Calu3 (cell line): ENCODE measurements at regions of chr16 and their contacts with region 1.

Region 1: DNA sequence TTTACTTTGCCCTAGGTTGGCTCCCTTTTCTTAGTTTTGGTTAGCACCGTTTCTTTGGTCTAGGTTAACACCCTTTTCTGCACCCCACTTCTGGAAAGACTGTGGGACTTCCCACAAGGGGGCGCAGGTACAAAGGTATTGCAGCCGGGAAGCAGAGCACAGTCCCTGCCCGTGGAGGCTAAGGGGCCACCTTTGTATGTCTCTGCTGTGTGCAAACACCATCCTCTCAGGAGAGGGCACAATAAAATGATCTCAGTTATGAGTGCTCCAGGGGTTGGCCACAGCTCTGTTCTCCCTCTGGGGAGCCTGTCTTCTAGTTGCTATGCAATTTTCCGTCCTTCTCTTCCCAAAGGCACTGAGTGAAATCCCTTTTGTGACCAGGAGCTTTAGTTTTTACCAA is 28.4 kb upstream of the TMC5 start:
- DNase-seq: peak; percentile 69
- H3K4me3 Mint-ChIP-seq: no peak overlapping the region
- H3K27ac Mint-ChIP-seq: no peak overlapping the region
- H3K4me1 Mint-ChIP-seq: peaks cover 41% of the 10 kb centered on the region
- H3K27me3 Mint-ChIP-seq: no peaks in the 10 kb centered on the region
- CTCF ChIP-seq: peak; percentile 61

Region 2: DNA sequence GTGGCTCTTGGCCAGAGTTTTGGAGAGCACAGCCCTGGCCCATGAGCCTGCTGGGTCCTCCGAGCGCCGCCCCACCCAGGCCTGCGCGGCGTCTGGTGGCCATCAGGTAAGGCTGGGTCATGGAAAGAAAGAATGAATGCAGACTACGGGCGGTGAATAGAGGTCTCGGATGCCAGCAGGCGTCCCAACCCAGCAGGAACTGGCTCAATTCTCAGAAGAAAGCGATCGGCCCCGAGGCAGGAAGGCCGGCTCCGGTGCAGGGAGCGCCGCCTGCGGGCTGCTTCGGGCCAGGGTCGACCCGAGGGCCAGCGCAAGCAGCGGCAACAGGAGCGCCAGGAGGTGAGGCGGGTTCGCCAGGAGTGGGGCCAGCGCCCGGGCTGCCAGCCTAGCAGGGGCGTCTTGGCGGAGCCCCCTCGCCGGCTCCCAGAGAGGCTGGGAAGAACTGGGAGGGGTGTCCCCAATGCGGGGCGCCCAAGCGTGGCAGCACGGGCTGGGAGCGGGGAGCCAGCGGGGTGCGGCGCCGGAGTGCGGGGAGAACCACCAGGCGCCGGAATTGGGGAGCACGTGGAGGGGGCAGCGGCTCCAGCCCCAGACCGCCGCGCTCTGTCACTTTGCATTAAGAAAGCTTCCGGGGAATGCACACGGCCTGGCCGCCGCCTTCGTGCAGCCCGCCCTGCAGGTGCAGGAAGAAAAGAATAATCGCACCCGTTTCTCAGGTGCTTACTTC is 21.4 kb after region 1 on chr16:
- CTCF ChIA-PET with region 1: interaction called, 4 read pairs
- intact Hi-C with region 1: loop called (anchors 1 kb)
- DNase-seq: peak; percentile 85
- H3K4me3 Mint-ChIP-seq: peak overlapping the region; percentile 81
- H3K27ac Mint-ChIP-seq: peak overlapping the region; percentile 85
- H3K4me1 Mint-ChIP-seq: peaks cover 32% of the 10 kb centered on the region
- H3K27me3 Mint-ChIP-seq: no peaks in the 10 kb centered on the region
- CTCF ChIP-seq: no peak

Region 3: DNA sequence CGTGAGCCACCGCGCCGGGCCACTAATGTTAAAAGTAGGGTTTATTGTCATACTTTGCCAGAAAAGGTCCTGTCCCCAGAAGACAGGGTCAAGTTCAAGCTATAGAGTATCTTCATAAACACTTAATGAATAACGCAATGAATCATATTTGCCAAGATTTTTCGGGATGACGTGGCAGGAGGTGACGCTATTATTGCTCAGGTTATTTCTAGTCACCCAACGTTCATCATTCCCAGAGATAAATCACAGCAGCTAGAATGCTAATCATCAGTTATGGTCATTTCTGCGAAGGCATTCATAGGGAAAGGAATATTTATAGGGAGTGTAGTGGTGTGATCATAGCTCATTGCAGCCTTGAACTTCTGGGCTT is 30.4 kb after region 1 on chr16:
- CTCF ChIA-PET with region 1: interaction called, 14 read pairs
- intact Hi-C with region 1: no loop called
- DNase-seq: peak; percentile 76
- H3K4me3 Mint-ChIP-seq: peak overlapping the region; percentile 83
- H3K27ac Mint-ChIP-seq: peak overlapping the region; percentile 96
- H3K4me1 Mint-ChIP-seq: peaks cover 77% of the 10 kb centered on the region
- H3K27me3 Mint-ChIP-seq: no peaks in the 10 kb centered on the region
- CTCF ChIP-seq: no peak

Region 4: DNA sequence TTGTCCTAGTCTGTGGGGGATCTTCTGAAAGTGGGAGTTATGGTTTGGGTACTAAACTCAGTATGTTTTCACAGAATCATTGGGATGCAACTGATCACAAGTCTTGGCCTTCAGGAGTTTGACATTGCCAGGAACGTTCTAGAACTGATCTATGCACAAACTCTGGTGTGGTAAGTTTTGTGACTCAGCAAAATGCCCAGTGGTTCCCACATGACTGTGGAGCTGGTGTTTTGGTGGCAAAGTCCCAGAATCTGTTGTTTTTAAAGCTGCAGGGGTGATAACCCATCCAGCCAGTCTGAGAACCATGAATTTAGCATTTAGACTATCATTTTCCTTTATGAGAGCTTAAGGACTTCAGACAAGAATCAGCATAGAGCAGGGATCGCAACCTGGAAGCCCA is 92.0 kb after region 1 on chr16:
- CTCF ChIA-PET with region 1: no interaction called
- intact Hi-C with region 1: loop called (anchors 5 kb)
- DNase-seq: no peak
- H3K4me3 Mint-ChIP-seq: no peak overlapping the region
- H3K27ac Mint-ChIP-seq: no peak overlapping the region
- H3K4me1 Mint-ChIP-seq: peaks cover 29% of the 10 kb centered on the region
- H3K27me3 Mint-ChIP-seq: no peaks in the 10 kb centered on the region
- CTCF ChIP-seq: no peak

Region 5: GRCh38 chr16:19502395-19503131 is 113.3 kb after region 1 on chr16:
- CTCF ChIA-PET with region 1: interaction called, 7 read pairs
- intact Hi-C with region 1: loop called (anchors 1 kb)
- DNase-seq: peak; percentile 88
- H3K4me3 Mint-ChIP-seq: no peak overlapping the region
- H3K27ac Mint-ChIP-seq: no peak overlapping the region
- H3K4me1 Mint-ChIP-seq: peaks cover 15% of the 10 kb centered on the region
- H3K27me3 Mint-ChIP-seq: no peaks in the 10 kb centered on the region
- CTCF ChIP-seq: peak; percentile 79